GM12878 (cell line): ENCODE measurements at regions of chr5 and their contacts with region 1.

Region 1: GRCh38 chr5:127030259-127031146 is at the start of gene MARCHF3:
- DNase-seq: peak; percentile 87
- ATAC-seq: peak; percentile 92
- H3K4me3 ChIP-seq: peak within 1 kb of the TSS; percentile 89
- H3K27ac ChIP-seq: peak within 1 kb of the TSS; percentile 46; the same call in 1 of the 2 replicates
- H3K4me1 ChIP-seq: peaks cover 6% of the 10 kb centered on the region
- H3K27me3 ChIP-seq: no peaks in the 10 kb centered on the region
- CTCF ChIP-seq: peak in 2 of 3 experiments; percentile 8 to 18; a peak in 2 of 6 replicates
- EP300 ChIP-seq: no peak
- POLR2A ChIP-seq: peak; percentile 95
- RAD21 ChIP-seq: no peak
- polyA plus RNA-seq, gene MARCHF3: 3.6 to 6.4 TPM

Region 2: DNA sequence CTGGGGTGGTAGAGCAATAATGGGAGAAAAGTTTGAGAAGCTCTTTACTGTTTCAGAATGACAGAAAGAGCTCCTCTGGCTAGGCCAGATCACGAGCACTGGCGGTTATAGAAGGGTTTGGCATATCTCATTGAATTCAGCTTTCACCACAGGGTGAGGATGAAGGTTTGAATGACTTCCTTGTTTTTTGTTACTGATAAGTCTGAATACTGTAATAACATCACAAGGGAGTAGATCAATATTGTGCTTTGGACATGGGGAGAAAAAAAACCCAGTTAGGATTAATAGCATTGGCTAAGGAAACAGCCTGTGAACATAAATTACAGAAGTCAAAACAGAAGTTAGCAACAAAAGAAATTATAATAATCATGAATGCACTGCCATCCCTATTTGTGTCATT is 420.3 kb before region 1 on chr5:
- CTCF ChIA-PET with region 1: no interaction called
- POLR2A ChIA-PET with region 1: no interaction called
- RAD21 ChIA-PET with region 1: no interaction called
- SMC1A ChIA-PET with region 1: no interaction called
- in situ Hi-C with region 1: no loop called
- intact Hi-C with region 1: no loop called
- DNase-seq: no peak
- ATAC-seq: peak; percentile 37; the same call in 2 of the 3 replicates
- H3K4me3 ChIP-seq: no peak overlapping the region
- H3K27ac ChIP-seq: no peak overlapping the region
- H3K4me1 ChIP-seq: peaks cover 8% of the 10 kb centered on the region; the same call in 1 of the 2 replicates
- H3K27me3 ChIP-seq: no peaks in the 10 kb centered on the region
- CTCF ChIP-seq: no peak
- EP300 ChIP-seq: no peak
- POLR2A ChIP-seq: no peak
- RAD21 ChIP-seq: no peak

Region 3: GRCh38 chr5:126965061-126965475 is 65.4 kb before region 1 on chr5:
- CTCF ChIA-PET with region 1: interaction called, 5 read pairs
- POLR2A ChIA-PET with region 1: interaction called, 9 read pairs
- RAD21 ChIA-PET with region 1: interaction called, 19 read pairs
- SMC1A ChIA-PET with region 1: interaction called, 26 read pairs
- in situ Hi-C with region 1: no loop called
- intact Hi-C with region 1: no loop called
- DNase-seq: peak; percentile 55
- ATAC-seq: peak; percentile 75
- H3K4me3 ChIP-seq: no peak overlapping the region
- H3K27ac ChIP-seq: no peak overlapping the region
- H3K4me1 ChIP-seq: peaks cover 14% of the 10 kb centered on the region
- H3K27me3 ChIP-seq: no peaks in the 10 kb centered on the region
- CTCF ChIP-seq: no peak
- EP300 ChIP-seq: no peak
- POLR2A ChIP-seq: no peak
- RAD21 ChIP-seq: no peak

Region 4: GRCh38 chr5:126988021-126988569 is 42.4 kb before region 1 on chr5:
- CTCF ChIA-PET with region 1: no interaction called
- POLR2A ChIA-PET with region 1: interaction called, 4 read pairs
- RAD21 ChIA-PET with region 1: no interaction called
- SMC1A ChIA-PET with region 1: interaction called, 8 read pairs
- in situ Hi-C with region 1: no loop called
- intact Hi-C with region 1: loop called (anchors 2 kb)
- DNase-seq: peak; percentile 79
- ATAC-seq: peak; percentile 93
- H3K4me3 ChIP-seq: peak overlapping the region; percentile 8; the same call in 1 of the 2 replicates
- H3K27ac ChIP-seq: peak overlapping the region; percentile 63
- H3K4me1 ChIP-seq: peaks cover 16% of the 10 kb centered on the region
- H3K27me3 ChIP-seq: no peaks in the 10 kb centered on the region
- CTCF ChIP-seq: no peak
- EP300 ChIP-seq: peak; percentile 57 to 78; a peak in 2 of 4 replicates
- POLR2A ChIP-seq: no peak
- RAD21 ChIP-seq: 0 out of 2 replicates have a peak, but pooled peaks have one; percentile 0

Region 5: GRCh38 chr5:127006744-127007143 is 23.8 kb before region 1 on chr5:
- CTCF ChIA-PET with region 1: interaction called, 25 read pairs
- POLR2A ChIA-PET with region 1: interaction called, 114 read pairs
- RAD21 ChIA-PET with region 1: interaction called, 107 read pairs
- SMC1A ChIA-PET with region 1: interaction called, 156 read pairs
- in situ Hi-C with region 1: no loop called
- intact Hi-C with region 1: no loop called
- DNase-seq: no peak
- ATAC-seq: peak; percentile 21; the same call in 1 of the 3 replicates
- H3K4me3 ChIP-seq: no peak overlapping the region
- H3K27ac ChIP-seq: no peak overlapping the region
- H3K4me1 ChIP-seq: peaks cover 9% of the 10 kb centered on the region; the same call in 1 of the 2 replicates
- H3K27me3 ChIP-seq: no peaks in the 10 kb centered on the region
- CTCF ChIP-seq: no peak
- EP300 ChIP-seq: no peak
- POLR2A ChIP-seq: no peak
- RAD21 ChIP-seq: no peak

Region 6: DNA sequence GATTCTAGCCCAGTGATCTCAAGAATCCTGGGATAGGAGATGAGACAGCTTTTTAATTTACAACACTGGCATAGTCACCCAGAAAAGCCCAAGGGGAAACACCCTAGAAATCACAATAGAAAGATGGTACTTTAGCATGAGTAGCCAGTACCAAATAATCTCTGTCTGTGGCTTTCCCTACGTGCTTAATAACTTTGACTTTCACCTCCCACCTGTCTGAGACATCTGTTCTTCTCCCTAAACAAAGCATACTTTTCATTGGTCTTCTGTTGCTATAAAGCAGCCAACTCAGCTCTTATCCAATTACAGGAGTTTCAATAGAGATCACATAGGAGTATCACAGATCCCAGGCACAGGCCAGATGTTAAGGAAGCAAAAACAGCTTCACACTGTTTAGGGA is 10.6 kb before region 1 on chr5:
- CTCF ChIA-PET with region 1: interaction called, 32 read pairs
- POLR2A ChIA-PET with region 1: interaction called, 114 read pairs
- RAD21 ChIA-PET with region 1: interaction called, 107 read pairs
- SMC1A ChIA-PET with region 1: interaction called, 156 read pairs
- in situ Hi-C with region 1: no loop called
- intact Hi-C with region 1: loop called (anchors 2 kb)
- DNase-seq: no peak
- ATAC-seq: peak; percentile 77
- H3K4me3 ChIP-seq: no peak overlapping the region
- H3K27ac ChIP-seq: no peak overlapping the region
- H3K4me1 ChIP-seq: no peaks in the 10 kb centered on the region
- H3K27me3 ChIP-seq: no peaks in the 10 kb centered on the region
- CTCF ChIP-seq: no peak
- EP300 ChIP-seq: no peak
- POLR2A ChIP-seq: no peak
- RAD21 ChIP-seq: no peak

Region 7: GRCh38 chr5:127428748-127429147 is 398.2 kb after region 1 on chr5:
- CTCF ChIA-PET with region 1: no interaction called
- POLR2A ChIA-PET with region 1: no interaction called
- RAD21 ChIA-PET with region 1: no interaction called
- SMC1A ChIA-PET with region 1: no interaction called
- in situ Hi-C with region 1: no loop called
- intact Hi-C with region 1: no loop called
- DNase-seq: no peak
- ATAC-seq: no peak
- H3K4me3 ChIP-seq: no peak overlapping the region
- H3K27ac ChIP-seq: no peak overlapping the region
- H3K4me1 ChIP-seq: no peaks in the 10 kb centered on the region
- H3K27me3 ChIP-seq: no peaks in the 10 kb centered on the region; a peak in 1 of 4 replicates
- CTCF ChIP-seq: no peak
- EP300 ChIP-seq: no peak
- POLR2A ChIP-seq: no peak
- RAD21 ChIP-seq: no peak